ENCODE measurements at regions of chr17 and their contacts with region 1.

Region 1: GRCh38 chr17:64129764-64130558 is at the start of gene ERN1:
- DNase-seq: peak; percentile 94 to 95
- ATAC-seq: peak; percentile 92 to 96
- H3K4me3 ChIP-seq: peak within 1 kb of the TSS; percentile 80
- H3K27ac ChIP-seq: peak within 1 kb of the TSS; percentile 85 to 95
- H3K4me1 ChIP-seq: peaks cover 35% of the 10 kb centered on the region
- CTCF ChIP-seq: no peak
- EP300 ChIP-seq: no peak
- POLR2A ChIP-seq: peak; percentile 98
- RAD21 ChIP-seq: 0 out of 5 replicates have a peak, but pooled peaks of 1 of the 2 experiments have one; percentile 47
- polyA plus RNA-seq, gene ERN1: 19.8 and 23.3 TPM in 2 replicates

Region 2: DNA sequence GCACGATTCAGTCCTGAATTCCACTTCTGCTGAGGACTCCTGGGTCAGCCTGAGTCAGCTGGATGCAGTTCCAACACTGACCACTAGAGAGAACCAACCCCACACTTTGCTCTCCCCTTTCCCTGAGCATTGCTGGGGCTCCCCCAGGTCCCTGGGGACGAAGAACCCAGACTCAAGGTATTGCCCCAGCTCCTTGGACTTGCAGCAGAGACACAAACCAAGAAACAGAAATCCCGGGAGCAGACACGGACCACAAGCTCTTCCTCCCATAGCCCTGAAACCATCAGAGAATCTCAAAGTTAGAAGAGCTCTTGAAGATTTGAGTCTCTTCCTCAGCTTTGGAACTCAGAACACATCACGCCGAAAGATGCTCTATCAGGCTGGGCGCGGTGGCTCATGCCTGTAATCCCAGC is 210.6 kb before region 1 on chr17:
- CTCF ChIA-PET with region 1: interaction called, 187 read pairs
- POLR2A ChIA-PET with region 1: interaction called, 3 read pairs
- DNase-seq: peak; percentile 67 to 92
- ATAC-seq: peak; percentile 83 to 97
- H3K4me3 ChIP-seq: no peak overlapping the region
- H3K27ac ChIP-seq: no peak overlapping the region
- H3K4me1 ChIP-seq: no peaks in the 10 kb centered on the region; the same call in 2 of the 3 replicates
- CTCF ChIP-seq: peak; percentile 90
- EP300 ChIP-seq: no peak
- POLR2A ChIP-seq: no peak
- RAD21 ChIP-seq: peak; percentile 91 to 95

Region 3: DNA sequence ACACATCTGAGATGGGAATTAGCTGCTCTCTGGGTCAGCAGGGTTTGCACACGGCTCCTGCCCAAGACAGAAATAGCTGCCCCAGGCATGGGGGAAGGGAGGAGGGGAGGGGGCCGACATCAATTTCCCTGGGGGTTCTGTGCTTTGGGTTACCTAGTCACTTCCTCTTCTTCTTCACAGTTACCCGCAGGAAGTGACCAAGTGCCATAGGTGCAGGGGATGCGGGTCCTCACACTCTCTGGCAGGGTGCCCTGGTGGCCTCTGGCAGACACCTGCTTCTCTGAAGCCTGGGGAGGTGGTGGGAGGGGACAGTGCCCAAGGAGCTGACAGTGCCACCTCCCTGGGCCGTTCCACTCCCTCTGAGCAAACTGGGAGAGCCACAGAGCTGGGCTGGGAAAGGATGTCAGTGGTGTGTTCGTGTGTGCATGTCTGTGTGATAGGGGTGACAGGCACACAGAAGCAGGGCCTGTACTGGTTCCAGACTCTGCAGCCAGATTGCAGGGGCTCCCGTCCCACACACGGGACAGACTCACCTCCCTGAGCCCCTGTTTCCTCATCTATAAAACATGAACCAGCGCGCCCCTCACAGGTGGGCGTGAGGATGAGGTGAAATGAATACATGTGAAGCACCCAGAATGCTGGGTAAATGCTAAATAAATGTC is 175.4 kb before region 1 on chr17:
- CTCF ChIA-PET with region 1: interaction called, 13 read pairs
- POLR2A ChIA-PET with region 1: no interaction called
- DNase-seq: no peak
- ATAC-seq: peak; percentile 6 to 26; a peak in 1 of 6 replicates
- H3K4me3 ChIP-seq: no peak overlapping the region
- H3K27ac ChIP-seq: no peak overlapping the region
- H3K4me1 ChIP-seq: no peaks in the 10 kb centered on the region
- CTCF ChIP-seq: no peak
- EP300 ChIP-seq: no peak
- POLR2A ChIP-seq: no peak
- RAD21 ChIP-seq: no peak

Region 4: GRCh38 chr17:64005734-64006167 is 124.2 kb before region 1 on chr17:
- CTCF ChIA-PET with region 1: interaction called, 12 read pairs
- POLR2A ChIA-PET with region 1: no interaction called
- DNase-seq: peak; percentile 56 to 64
- ATAC-seq: peak; percentile 22 to 66; a peak in 4 of 6 replicates
- H3K4me3 ChIP-seq: no peak overlapping the region
- H3K27ac ChIP-seq: peak overlapping the region in 1 of 2 experiments; percentile 49; a peak in 3 of 6 replicates
- H3K4me1 ChIP-seq: peaks cover 28% of the 10 kb centered on the region
- CTCF ChIP-seq: no peak
- EP300 ChIP-seq: 0 out of 5 replicates have a peak, but pooled peaks of 1 of the 2 experiments have one; percentile 11
- POLR2A ChIP-seq: no peak
- RAD21 ChIP-seq: no peak

Region 5: GRCh38 chr17:64056269-64057005 is 73.5 kb before region 1 on chr17:
- CTCF ChIA-PET with region 1: interaction called, 119 read pairs
- POLR2A ChIA-PET with region 1: interaction called, 4 read pairs
- DNase-seq: no peak
- ATAC-seq: peak in 1 of 2 experiments; percentile 28; a peak in 3 of 6 replicates
- H3K4me3 ChIP-seq: no peak overlapping the region
- H3K27ac ChIP-seq: peak overlapping the region in 1 of 2 experiments; percentile 11; a peak in 1 of 6 replicates
- H3K4me1 ChIP-seq: peaks cover 29% of the 10 kb centered on the region
- CTCF ChIP-seq: no peak
- EP300 ChIP-seq: no peak
- POLR2A ChIP-seq: no peak
- RAD21 ChIP-seq: no peak

Region 6: GRCh38 chr17:64081802-64082799 is 47.9 kb before region 1 on chr17:
- CTCF ChIA-PET with region 1: interaction called, 26 read pairs
- POLR2A ChIA-PET with region 1: interaction called, 27 read pairs
- DNase-seq: peak; percentile 79 to 93
- ATAC-seq: peak; percentile 85 to 95
- H3K4me3 ChIP-seq: peak overlapping the region; percentile 2; the same call in 1 of the 3 replicates
- H3K27ac ChIP-seq: peak overlapping the region; percentile 88 to 89
- H3K4me1 ChIP-seq: peaks cover 77% of the 10 kb centered on the region
- CTCF ChIP-seq: no peak
- EP300 ChIP-seq: peak; percentile 87 to 93; a peak in 4 of 5 replicates
- POLR2A ChIP-seq: no peak
- RAD21 ChIP-seq: peak in 1 of 2 experiments; percentile 49; a peak in 3 of 5 replicates

Region 7: DNA sequence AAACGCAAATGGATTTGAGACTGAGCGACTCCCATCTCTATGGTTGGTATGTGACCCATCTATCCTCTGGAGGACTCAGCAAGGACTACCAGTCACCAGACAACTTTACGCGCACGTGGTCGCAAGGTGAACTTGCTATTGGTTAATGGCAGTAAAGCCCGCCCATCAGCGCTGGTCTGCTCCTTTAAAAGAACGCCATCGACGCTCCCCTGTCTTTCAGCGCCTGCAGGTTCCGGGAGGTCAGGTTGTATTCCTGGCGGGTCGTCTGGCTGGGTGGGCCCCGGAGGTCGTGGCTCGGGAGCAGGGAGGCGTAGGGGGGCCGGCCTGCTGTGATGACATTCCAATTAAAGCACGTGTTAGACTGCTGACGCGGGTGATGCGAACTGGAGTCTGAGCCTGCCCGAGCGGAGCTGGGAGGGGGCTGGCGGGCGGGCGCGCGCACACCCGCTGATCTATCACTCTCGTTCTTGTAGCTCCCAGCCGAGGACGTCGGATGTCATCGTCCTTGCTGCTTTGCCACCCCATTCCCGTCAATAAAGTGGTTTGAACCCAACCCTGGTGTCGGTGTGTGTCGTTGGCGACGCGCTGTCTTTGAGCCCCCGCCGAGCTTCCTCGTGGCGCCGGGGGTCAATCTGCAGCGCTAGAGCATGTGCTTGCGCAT is 15.9 kb after region 1 on chr17:
- CTCF ChIA-PET with region 1: interaction called, 105 read pairs
- POLR2A ChIA-PET with region 1: interaction called, 40 read pairs
- DNase-seq: peak; percentile 99 to 100
- ATAC-seq: peak; percentile 80 to 92
- H3K4me3 ChIP-seq: peak overlapping the region; percentile 73
- H3K27ac ChIP-seq: peak overlapping the region; percentile 93 to 98
- H3K4me1 ChIP-seq: peaks cover 27% of the 10 kb centered on the region; the same call in 2 of the 3 replicates
- CTCF ChIP-seq: no peak
- EP300 ChIP-seq: no peak
- POLR2A ChIP-seq: peak; percentile 97
- RAD21 ChIP-seq: no peak

Region 8: GRCh38 chr17:64259922-64260321 is 130.0 kb after region 1 on chr17:
- CTCF ChIA-PET with region 1: no interaction called
- POLR2A ChIA-PET with region 1: no interaction called
- DNase-seq: no peak
- ATAC-seq: no peak
- H3K4me3 ChIP-seq: no peak overlapping the region
- H3K27ac ChIP-seq: no peak overlapping the region
- H3K4me1 ChIP-seq: peaks cover 22% of the 10 kb centered on the region; the same call in 2 of the 3 replicates
- CTCF ChIP-seq: no peak
- EP300 ChIP-seq: no peak
- POLR2A ChIP-seq: no peak
- RAD21 ChIP-seq: no peak